CD4-positive, alpha-beta memory T cell (primary cell): ENCODE measurements at regions of chr9 and their contacts with region 1.

Region 1: GRCh38 chr9:84697509-84698114 is 28.1 kb downstream of the NTRK2 start:
- DNase-seq: peak in 4 of 5 donors; percentile 13 to 22 (median 16)
- H3K4me3 ChIP-seq: no peak overlapping the region
- H3K4me3 Mint-ChIP-seq: no peak overlapping the region
- H3K27ac ChIP-seq: no peak overlapping the region
- H3K27ac Mint-ChIP-seq: no peak overlapping the region
- H3K4me1 ChIP-seq: no peaks in the 10 kb centered on the region
- H3K4me1 Mint-ChIP-seq: peaks cover 0 to 5% (median under 1%) of the 10 kb centered on the region in 4 donors
- H3K27me3 ChIP-seq: no peaks in the 10 kb centered on the region
- H3K27me3 Mint-ChIP-seq: peaks cover 0 to 3% of the 10 kb centered on the region in 2 donors

Region 2: GRCh38 chr9:84731696-84732095 is 34.1 kb after region 1 on chr9:
- CTCF ChIA-PET with region 1: no interaction called
- POLR2A ChIA-PET with region 1: no interaction called
- intact Hi-C with region 1: no loop called
- DNase-seq: no peak
- H3K4me3 ChIP-seq: no peak overlapping the region
- H3K4me3 Mint-ChIP-seq: no peak overlapping the region
- H3K27ac ChIP-seq: no peak overlapping the region
- H3K27ac Mint-ChIP-seq: no peak overlapping the region
- H3K4me1 ChIP-seq: no peaks in the 10 kb centered on the region
- H3K4me1 Mint-ChIP-seq: no peaks in the 10 kb centered on the region
- H3K27me3 ChIP-seq: no peaks in the 10 kb centered on the region
- H3K27me3 Mint-ChIP-seq: no peaks in the 10 kb centered on the region

Region 3: DNA sequence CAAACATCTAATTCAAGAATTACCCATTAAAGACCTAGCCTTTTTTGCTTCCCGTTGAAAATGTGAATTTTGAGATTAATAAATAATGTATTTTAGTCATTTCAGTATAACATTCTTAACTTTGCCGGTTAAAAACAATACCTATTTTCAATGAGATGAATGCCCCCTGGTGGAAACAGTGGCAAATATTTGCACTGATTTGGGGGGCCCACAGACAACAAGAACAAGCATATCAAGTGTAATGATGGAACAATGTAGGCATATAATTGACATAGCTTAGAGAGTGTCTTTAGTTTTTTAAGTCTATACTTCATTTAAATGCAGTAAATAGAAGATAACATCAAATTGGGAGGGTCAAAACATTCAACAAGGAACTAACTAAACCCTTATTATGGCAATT is 83.8 kb after region 1 on chr9:
- CTCF ChIA-PET with region 1: interaction called, 38 read pairs
- POLR2A ChIA-PET with region 1: no interaction called
- intact Hi-C with region 1: loop called (anchors 1 kb)
- DNase-seq: peak in 2 of 5 donors; percentile 4 to 5
- H3K4me3 ChIP-seq: no peak overlapping the region
- H3K4me3 Mint-ChIP-seq: no peak overlapping the region
- H3K27ac ChIP-seq: no peak overlapping the region
- H3K27ac Mint-ChIP-seq: no peak overlapping the region
- H3K4me1 ChIP-seq: no peaks in the 10 kb centered on the region
- H3K4me1 Mint-ChIP-seq: no peaks in the 10 kb centered on the region
- H3K27me3 ChIP-seq: no peaks in the 10 kb centered on the region
- H3K27me3 Mint-ChIP-seq: peaks cover 0 to 8% of the 10 kb centered on the region in 2 donors